OCI-LY7 (cell line): ENCODE measurements at regions of chr15 and their contacts with region 1.

Region 1: DNA sequence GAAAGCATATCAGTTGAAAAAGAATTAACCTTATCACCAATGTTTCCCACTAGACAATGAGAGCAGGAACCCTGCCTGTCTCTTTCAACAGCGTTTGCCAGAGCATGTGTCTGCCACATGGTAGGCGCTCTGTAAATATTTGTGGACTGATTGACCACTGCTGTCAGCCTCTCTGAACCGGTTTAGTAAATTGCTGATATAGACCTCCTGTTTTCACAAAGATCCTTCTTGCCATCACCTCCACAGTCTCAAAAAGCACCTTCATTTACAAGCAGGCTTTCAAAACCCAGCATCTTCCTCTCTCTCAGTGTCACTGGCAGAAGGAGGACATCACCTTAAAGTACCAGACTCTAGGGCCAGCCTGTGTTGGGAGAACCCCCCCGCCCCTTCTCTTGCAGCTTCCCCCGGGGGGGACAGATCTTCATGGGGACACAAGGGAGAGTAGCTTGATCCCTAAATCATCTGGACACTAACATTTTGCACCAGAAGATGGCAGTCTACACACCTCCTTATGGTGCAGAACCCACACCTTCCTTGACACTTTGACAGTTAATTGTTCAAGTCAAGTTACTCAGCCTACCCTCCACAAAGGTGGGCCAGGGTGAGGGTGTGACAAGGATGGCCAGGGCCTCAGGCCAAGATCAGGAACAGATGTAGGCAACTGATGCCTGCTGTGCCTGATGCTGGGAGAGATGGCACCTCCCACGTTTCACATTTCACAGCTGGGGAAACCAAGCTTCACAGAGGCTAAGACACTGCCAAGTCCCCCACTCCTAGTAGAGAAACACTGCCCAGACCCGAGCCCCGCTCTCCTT is 37.8 kb upstream of the USP3 start:
- DNase-seq: peak; percentile 87
- H3K4me3 ChIP-seq: no peak overlapping the region
- H3K27ac ChIP-seq: no peak overlapping the region
- H3K4me1 ChIP-seq: peaks cover 37% of the 10 kb centered on the region
- CTCF ChIP-seq: peak; percentile 88

Region 2: GRCh38 chr15:63447017-63447676 is 19.4 kb before region 1 on chr15:
- CTCF ChIA-PET with region 1: no interaction called
- POLR2A ChIA-PET with region 1: interaction called, 10 read pairs
- intact Hi-C with region 1: no loop called
- DNase-seq: no peak
- H3K4me3 ChIP-seq: no peak overlapping the region
- H3K27ac ChIP-seq: no peak overlapping the region
- H3K4me1 ChIP-seq: peaks cover 5% of the 10 kb centered on the region
- CTCF ChIP-seq: no peak

Region 3: GRCh38 chr15:63504247-63504978 is 37.8 kb after region 1 on chr15 and contains the start of gene USP3:
- CTCF ChIA-PET with region 1: interaction called, 6 read pairs
- POLR2A ChIA-PET with region 1: interaction called, 5 read pairs
- intact Hi-C with region 1: loop called (anchors 1 kb)
- DNase-seq: peak; percentile 97
- H3K4me3 ChIP-seq: peak within 1 kb of the TSS; percentile 87
- H3K27ac ChIP-seq: peak within 1 kb of the TSS; percentile 77
- H3K4me1 ChIP-seq: peaks cover 72% of the 10 kb centered on the region
- CTCF ChIP-seq: no peak; the same call in 1 of the 2 replicates
- total RNA-seq, gene USP3: 26.3 and 34.6 TPM in 2 replicates

Region 4: GRCh38 chr15:63610200-63610841 is 143.7 kb after region 1 on chr15:
- CTCF ChIA-PET with region 1: interaction called, 11 read pairs
- POLR2A ChIA-PET with region 1: no interaction called
- intact Hi-C with region 1: loop called (anchors 1 kb)
- DNase-seq: peak; percentile 88
- H3K4me3 ChIP-seq: no peak overlapping the region
- H3K27ac ChIP-seq: peak overlapping the region; percentile 52
- H3K4me1 ChIP-seq: peaks cover 19% of the 10 kb centered on the region
- CTCF ChIP-seq: peak; percentile 95

Region 5: GRCh38 chr15:64067564-64068030 is 601.0 kb after region 1 on chr15:
- CTCF ChIA-PET with region 1: no interaction called
- POLR2A ChIA-PET with region 1: no interaction called
- intact Hi-C with region 1: loop called (anchors 1 kb)
- DNase-seq: peak; percentile 81
- H3K4me3 ChIP-seq: peak overlapping the region; percentile 9
- H3K27ac ChIP-seq: no peak overlapping the region
- H3K4me1 ChIP-seq: peaks cover 17% of the 10 kb centered on the region
- CTCF ChIP-seq: peak; percentile 87